ENCODE measurements at regions of chr22 and their contacts with region 1.

Region 1: GRCh38 chr22:49852898-49853894 is at the start of gene ZBED4:
- DNase-seq: peak; percentile 97
- H3K4me3 Mint-ChIP-seq: peak within 1 kb of the TSS; percentile 94
- H3K27ac Mint-ChIP-seq: peak within 1 kb of the TSS; percentile 88
- H3K4me1 Mint-ChIP-seq: peaks cover 13% of the 10 kb centered on the region
- H3K27me3 Mint-ChIP-seq: no peaks in the 10 kb centered on the region
- CTCF ChIP-seq: no peak
- total RNA-seq, gene ZBED4: 15.9 and 16.4 TPM in 2 replicates

Region 2: GRCh38 chr22:49701380-49702067 is 151.7 kb before region 1 on chr22:
- CTCF ChIA-PET with region 1: no interaction called
- POLR2A ChIA-PET with region 1: no interaction called
- intact Hi-C with region 1: no loop called
- DNase-seq: peak; percentile 1
- H3K4me3 Mint-ChIP-seq: no peak overlapping the region
- H3K27ac Mint-ChIP-seq: no peak overlapping the region
- H3K4me1 Mint-ChIP-seq: no peaks in the 10 kb centered on the region
- H3K27me3 Mint-ChIP-seq: no peaks in the 10 kb centered on the region
- CTCF ChIP-seq: peak; percentile 45

Region 3: GRCh38 chr22:49827853-49828598 is 25.2 kb before region 1 on chr22 and contains the start of gene BRD1:
- CTCF ChIA-PET with region 1: no interaction called
- POLR2A ChIA-PET with region 1: interaction called, 31 read pairs
- intact Hi-C with region 1: loop called (anchors 2 kb)
- DNase-seq: peak; percentile 61
- H3K4me3 Mint-ChIP-seq: peak within 1 kb of the TSS; percentile 83
- H3K27ac Mint-ChIP-seq: peak within 1 kb of the TSS; percentile 88
- H3K4me1 Mint-ChIP-seq: peaks cover 19% of the 10 kb centered on the region
- H3K27me3 Mint-ChIP-seq: no peaks in the 10 kb centered on the region
- CTCF ChIP-seq: no peak
- total RNA-seq, gene BRD1: 40.7 and 48.1 TPM in 2 replicates

Region 4: DNA sequence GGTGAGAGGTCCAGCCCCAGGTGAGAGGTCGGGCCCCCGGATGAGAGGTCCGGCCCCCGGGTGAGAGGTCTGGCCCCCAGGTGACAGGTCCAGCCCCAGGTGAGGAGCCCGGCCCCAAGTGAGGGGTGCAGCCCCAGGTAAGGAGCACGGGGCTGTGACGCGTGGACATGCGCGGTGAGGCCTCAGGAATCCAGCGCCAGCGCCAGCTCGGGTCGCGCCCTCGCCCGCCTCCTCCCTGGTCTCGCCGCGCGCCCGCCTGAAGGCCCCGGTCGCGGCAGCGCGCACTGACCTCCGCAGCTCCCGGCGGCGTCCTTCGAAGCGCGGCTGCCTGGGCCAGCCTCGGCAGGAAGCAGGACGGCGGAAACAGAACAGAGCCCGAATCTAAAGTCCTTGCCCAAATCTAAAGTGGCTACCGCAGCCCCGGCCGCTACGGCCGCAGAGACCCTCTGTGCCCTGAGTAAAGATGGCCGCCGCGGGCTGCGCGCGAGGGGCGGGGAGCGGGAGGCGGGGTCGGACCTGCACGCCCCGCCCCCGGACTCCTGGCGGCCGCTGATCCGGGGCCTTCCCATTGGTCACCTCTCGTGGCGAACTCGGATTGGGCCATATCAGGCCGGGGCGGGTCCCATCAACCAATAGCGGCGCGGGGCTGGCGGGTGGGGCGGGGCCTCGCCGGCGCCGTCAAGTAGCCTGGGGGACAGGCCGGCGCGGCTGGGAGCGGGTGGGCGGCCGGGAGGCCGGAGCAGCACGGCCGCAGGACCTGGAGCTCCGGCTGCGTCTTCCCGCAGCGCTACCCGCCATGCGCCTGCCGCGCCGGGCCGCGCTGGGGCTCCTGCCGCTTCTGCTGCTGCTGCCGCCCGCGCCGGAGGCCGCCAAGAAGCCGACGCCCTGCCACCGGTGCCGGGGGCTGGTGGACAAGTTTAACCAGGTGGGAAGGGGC is 65.0 kb after region 1 on chr22 and contains the starts of genes ALG12 and CRELD2:
- CTCF ChIA-PET with region 1: interaction called, 3 read pairs
- POLR2A ChIA-PET with region 1: interaction called, 8 read pairs
- intact Hi-C with region 1: loop called (anchors 10 kb)
- DNase-seq: peak; percentile 96
- H3K4me3 Mint-ChIP-seq: peak within 1 kb of the TSS; percentile 74
- H3K27ac Mint-ChIP-seq: peak within 1 kb of the TSS; percentile 83
- H3K4me1 Mint-ChIP-seq: no peaks in the 10 kb centered on the region
- H3K27me3 Mint-ChIP-seq: no peaks in the 10 kb centered on the region
- CTCF ChIP-seq: no peak
- total RNA-seq, gene ALG12: 16.6 and 18.2 TPM in 2 replicates
- total RNA-seq, gene CRELD2: 70.7 and 107 TPM in 2 replicates

Measured in MCF 10A (cell line).